Heart right ventricle (tissue), 16 donors: ENCODE measurements at regions of chr3 and their contacts with region 1.

Region 1: DNA sequence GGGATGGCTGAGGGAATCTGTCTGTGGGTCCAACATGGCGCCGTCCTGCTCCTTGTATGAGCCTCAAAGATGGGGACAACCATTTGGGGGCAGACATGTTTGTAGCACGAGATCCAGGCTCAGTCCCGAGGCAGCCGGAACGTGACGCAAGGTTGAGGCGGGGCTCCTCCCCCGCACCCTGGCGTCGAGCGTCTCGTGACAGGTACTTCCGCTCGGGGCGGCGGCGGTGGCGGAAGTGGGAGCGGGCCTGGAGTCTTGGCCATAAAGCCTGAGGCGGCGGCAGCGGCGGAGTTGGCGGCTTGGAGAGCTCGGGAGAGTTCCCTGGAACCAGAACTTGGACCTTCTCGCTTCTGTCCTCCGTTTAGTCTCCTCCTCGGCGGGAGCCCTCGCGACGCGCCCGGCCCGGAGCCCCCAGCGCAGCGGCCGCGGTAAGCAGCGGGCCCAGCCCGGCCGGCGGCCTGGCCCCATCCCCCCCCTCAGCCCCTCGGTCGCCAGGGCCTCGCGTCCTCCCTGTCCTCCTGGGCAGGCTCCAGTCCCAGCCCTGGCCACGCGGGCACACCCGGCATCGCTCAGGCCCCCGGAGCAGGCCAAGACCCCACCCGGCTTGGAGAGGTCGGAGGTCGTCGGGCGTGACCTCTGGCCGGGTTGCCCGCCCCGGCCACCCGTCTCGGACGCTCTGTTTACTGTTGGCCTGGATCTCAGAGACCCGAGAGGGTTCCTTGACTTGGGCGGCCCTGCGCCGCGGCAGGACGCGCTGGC is at the start of gene RAB7A:
- DNase-seq: peak; percentile 97 to 98
- ATAC-seq: peak; percentile 98 to 100 (median 99)
- H3K4me3 ChIP-seq: peak within 1 kb of the TSS; percentile 58 to 100 (median 94)
- H3K27ac ChIP-seq: peak within 1 kb of the TSS; percentile 90 to 99 (median 96)
- H3K4me1 ChIP-seq: peaks cover 12 to 50% (median 42%) of the 10 kb centered on the region in 9 donors
- H3K27me3 ChIP-seq: no peaks in the 10 kb centered on the region
- CTCF ChIP-seq: peak in 2 of 9 donors; percentile 15 to 24
- total RNA-seq, gene RAB7A: 234 to 348 (median 310) TPM

Region 2: GRCh38 chr3:128650096-128651050 is 75.7 kb before region 1 on chr3 and contains the start of gene RPN1:
- intact Hi-C with region 1: loop called in 1 of 10 experiments (anchors 2 kb)
- DNase-seq: peak; percentile 96 to 97
- ATAC-seq: peak; percentile 99 to 100 (median 100)
- H3K4me3 ChIP-seq: peak within 1 kb of the TSS; percentile 75 to 100 (median 97)
- H3K27ac ChIP-seq: peak within 1 kb of the TSS; percentile 93 to 99 (median 98)
- H3K4me1 ChIP-seq: peaks cover 3 to 34% (median 20%) of the 10 kb centered on the region in 9 donors
- H3K27me3 ChIP-seq: no peaks in the 10 kb centered on the region
- CTCF ChIP-seq: no peak
- total RNA-seq, gene RPN1: 74.9 to 170 (median 83.6) TPM

Region 3: GRCh38 chr3:128680602-128681368 is 45.3 kb before region 1 on chr3:
- intact Hi-C with region 1: loop called in 4 of 10 experiments (anchors 1 to 5 kb)
- DNase-seq: peak; percentile 100
- ATAC-seq: peak; percentile 99 to 100 (median 100)
- H3K4me3 ChIP-seq: peak overlapping the region; percentile 54 to 78 (median 66)
- H3K27ac ChIP-seq: peak overlapping the region; percentile 88 to 99 (median 95)
- H3K4me1 ChIP-seq: peaks cover 0 to 21% (median 8%) of the 10 kb centered on the region in 9 donors
- H3K27me3 ChIP-seq: no peaks in the 10 kb centered on the region
- CTCF ChIP-seq: peak; percentile 92 to 100 (median 97)

Region 4: DNA sequence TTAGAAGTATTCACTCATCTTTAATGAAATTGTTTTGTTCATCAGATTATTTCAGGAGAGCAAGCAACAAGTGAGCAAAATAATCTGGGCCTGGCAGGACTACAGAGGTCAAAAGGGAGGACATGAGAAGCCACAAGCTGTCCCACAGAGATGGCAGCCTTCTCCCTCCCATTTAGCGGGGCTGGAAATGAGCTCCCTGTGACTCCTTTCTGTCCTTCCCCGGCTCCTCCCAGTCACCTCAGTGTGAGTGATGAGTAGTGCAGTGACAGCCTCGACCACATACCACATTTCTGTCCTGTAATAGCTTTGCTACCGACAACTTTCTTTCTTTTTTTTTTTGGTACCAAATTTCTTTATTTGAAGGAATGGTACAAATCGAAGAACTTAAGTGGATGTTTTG is 37.9 kb after region 1 on chr3:
- intact Hi-C with region 1: no loop called
- DNase-seq: peak in 1 of 2 donors; percentile 40
- ATAC-seq: peak; percentile 53 to 86 (median 70)
- H3K4me3 ChIP-seq: no peak overlapping the region
- H3K27ac ChIP-seq: peak overlapping the region in 6 of 10 donors; percentile 14 to 59 (median 40)
- H3K4me1 ChIP-seq: peaks cover 8 to 99% (median 77%) of the 10 kb centered on the region in 9 donors
- H3K27me3 ChIP-seq: no peaks in the 10 kb centered on the region
- CTCF ChIP-seq: no peak

Region 5: GRCh38 chr3:128787256-128788240 is 61.4 kb after region 1 on chr3:
- intact Hi-C with region 1: loop called in 3 of 10 experiments (anchors 5 kb)
- DNase-seq: no peak
- ATAC-seq: no peak
- H3K4me3 ChIP-seq: no peak overlapping the region
- H3K27ac ChIP-seq: peak overlapping the region in 6 of 10 donors; percentile 0 to 83 (median 60)
- H3K4me1 ChIP-seq: peaks cover 32 to 100% (median 91%) of the 10 kb centered on the region in 9 donors
- H3K27me3 ChIP-seq: no peaks in the 10 kb centered on the region
- CTCF ChIP-seq: peak in 6 of 9 donors; percentile 15 to 33 (median 26)

Region 6: DNA sequence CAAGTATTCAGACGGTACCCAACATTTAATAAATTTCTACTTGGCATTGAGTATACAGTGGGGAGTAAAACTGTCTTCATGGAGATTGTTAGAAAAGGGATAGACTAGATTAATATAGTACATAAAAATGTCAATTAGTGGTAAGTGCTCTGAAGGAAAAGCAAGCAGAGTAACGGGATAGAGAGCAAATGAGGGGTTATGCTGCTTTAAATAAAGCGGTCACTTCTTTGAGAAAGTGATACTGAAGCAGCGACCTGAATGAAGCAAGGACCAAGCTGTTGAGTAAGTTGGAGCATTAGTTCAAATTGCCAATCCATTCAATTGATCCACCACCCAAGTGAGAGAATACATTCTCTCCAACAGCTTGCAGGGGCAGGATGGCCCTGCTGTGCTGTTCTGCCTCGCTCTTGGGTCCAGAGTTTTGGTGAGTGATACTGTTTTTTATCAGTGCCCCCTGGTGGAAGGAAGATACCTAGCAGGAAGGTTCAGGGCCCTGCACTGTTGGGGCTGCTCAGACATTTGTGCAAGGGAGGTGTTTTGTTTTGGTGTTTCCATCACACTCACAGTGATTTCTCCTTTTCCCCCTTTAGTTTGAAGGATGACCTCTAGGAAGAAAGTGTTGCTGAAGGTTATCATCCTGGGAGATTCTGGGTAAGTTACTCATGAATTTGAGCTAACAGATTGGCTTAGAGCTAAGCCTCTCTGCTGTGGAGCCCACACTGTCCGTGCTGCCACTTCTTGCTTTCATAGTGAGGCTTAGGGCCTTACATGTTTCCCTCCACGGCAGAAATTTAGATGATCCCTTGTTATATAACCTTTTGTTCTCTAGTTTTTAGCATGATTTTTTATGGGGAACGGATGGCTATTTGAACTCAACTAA is 68.9 kb after region 1 on chr3:
- intact Hi-C with region 1: loop called in 4 of 10 experiments (anchors 5 kb)
- DNase-seq: peak in 1 of 2 donors; percentile 77
- ATAC-seq: peak; percentile 78 to 96 (median 94)
- H3K4me3 ChIP-seq: no peak overlapping the region
- H3K27ac ChIP-seq: peak overlapping the region in 7 of 10 donors; percentile 25 to 75 (median 50)
- H3K4me1 ChIP-seq: peaks cover 4 to 69% (median 49%) of the 10 kb centered on the region in 9 donors
- H3K27me3 ChIP-seq: no peaks in the 10 kb centered on the region
- CTCF ChIP-seq: peak; percentile 58 to 86 (median 82)

Region 7: GRCh38 chr3:128804017-128804810 is 78.1 kb after region 1 on chr3:
- intact Hi-C with region 1: loop called in 4 of 10 experiments (anchors 5 kb)
- DNase-seq: no peak
- ATAC-seq: peak in 7 of 8 donors; percentile 30 to 64 (median 51)
- H3K4me3 ChIP-seq: peak overlapping the region in 8 of 10 donors; percentile 10 to 44 (median 24)
- H3K27ac ChIP-seq: peak overlapping the region in 9 of 10 donors; percentile 32 to 88 (median 81)
- H3K4me1 ChIP-seq: peaks cover 4 to 94% (median 80%) of the 10 kb centered on the region in 9 donors
- H3K27me3 ChIP-seq: no peaks in the 10 kb centered on the region
- CTCF ChIP-seq: no peak

Region 8: GRCh38 chr3:129211772-129212171 is 485.7 kb after region 1 on chr3:
- intact Hi-C with region 1: no loop called
- DNase-seq: peak; percentile 46 to 71
- ATAC-seq: peak in 7 of 8 donors; percentile 62 to 89 (median 76)
- H3K4me3 ChIP-seq: no peak overlapping the region
- H3K27ac ChIP-seq: peak overlapping the region in 3 of 10 donors; percentile 15 to 64 (median 15)
- H3K4me1 ChIP-seq: peaks cover 0 to 20% (median 11%) of the 10 kb centered on the region in 9 donors
- H3K27me3 ChIP-seq: no peaks in the 10 kb centered on the region
- CTCF ChIP-seq: no peak